ENCODE measurements at regions of chr15 and their contacts with region 1.

Region 1: DNA sequence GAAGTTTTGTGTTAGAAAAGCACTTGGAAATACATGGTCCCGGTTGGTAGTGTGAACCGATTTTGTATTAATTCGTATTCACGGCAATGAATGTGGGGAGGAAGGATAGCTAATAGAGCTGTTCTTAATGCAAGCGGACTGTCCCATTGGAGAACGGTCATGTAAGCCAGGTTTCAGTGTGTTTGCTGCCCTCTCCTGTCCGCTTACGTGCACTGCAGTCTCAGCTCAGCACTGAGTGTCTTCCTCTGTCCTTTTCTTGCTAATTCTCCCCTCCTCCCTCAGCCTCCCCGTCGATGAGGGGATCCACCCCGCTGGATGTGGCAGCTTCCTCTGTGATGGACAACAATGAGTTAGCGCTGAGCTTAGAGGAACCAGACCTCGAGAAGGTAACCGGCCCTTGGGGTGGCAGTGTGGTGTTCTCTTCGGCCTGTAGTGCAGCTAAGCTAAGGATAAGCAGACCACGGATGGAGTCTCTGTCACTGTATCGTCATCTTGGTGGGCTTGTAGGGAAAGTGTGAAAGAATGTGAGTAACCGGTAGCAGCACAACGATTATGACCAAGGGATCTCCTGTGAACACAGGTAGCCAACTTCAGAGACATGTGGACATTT is 267.5 kb upstream of the CHRM5 start:
- DNase-seq: peak; percentile 69 to 76
- ATAC-seq: peak; percentile 89 to 98 (median 94)
- H3K4me3 ChIP-seq: peak overlapping the region; percentile 27
- H3K27ac ChIP-seq: no peak overlapping the region
- H3K4me1 ChIP-seq: peaks cover 5% of the 10 kb centered on the region
- H3K27me3 ChIP-seq: no peaks in the 10 kb centered on the region
- CTCF ChIP-seq: peak; percentile 93

Region 2: GRCh38 chr15:33234014-33234461 is 466.8 kb before region 1 on chr15:
- intact Hi-C with region 1: loop called in 1 of 2 experiments (anchors 10 kb)
- DNase-seq: no peak
- ATAC-seq: peak in 1 of 4 donors; percentile 26
- H3K4me3 ChIP-seq: no peak overlapping the region
- H3K27ac ChIP-seq: no peak overlapping the region
- H3K4me1 ChIP-seq: no peaks in the 10 kb centered on the region
- H3K27me3 ChIP-seq: no peaks in the 10 kb centered on the region
- CTCF ChIP-seq: peak; percentile 41

Region 3: GRCh38 chr15:33292717-33293307 is 408.0 kb before region 1 on chr15:
- intact Hi-C with region 1: loop called (anchors 5 kb)
- DNase-seq: peak in 1 of 2 donors; percentile 24
- ATAC-seq: peak; percentile 61 to 90 (median 78)
- H3K4me3 ChIP-seq: peak overlapping the region; percentile 6
- H3K27ac ChIP-seq: peak overlapping the region; percentile 72
- H3K4me1 ChIP-seq: no peaks in the 10 kb centered on the region
- H3K27me3 ChIP-seq: no peaks in the 10 kb centered on the region
- CTCF ChIP-seq: peak; percentile 72

Region 4: DNA sequence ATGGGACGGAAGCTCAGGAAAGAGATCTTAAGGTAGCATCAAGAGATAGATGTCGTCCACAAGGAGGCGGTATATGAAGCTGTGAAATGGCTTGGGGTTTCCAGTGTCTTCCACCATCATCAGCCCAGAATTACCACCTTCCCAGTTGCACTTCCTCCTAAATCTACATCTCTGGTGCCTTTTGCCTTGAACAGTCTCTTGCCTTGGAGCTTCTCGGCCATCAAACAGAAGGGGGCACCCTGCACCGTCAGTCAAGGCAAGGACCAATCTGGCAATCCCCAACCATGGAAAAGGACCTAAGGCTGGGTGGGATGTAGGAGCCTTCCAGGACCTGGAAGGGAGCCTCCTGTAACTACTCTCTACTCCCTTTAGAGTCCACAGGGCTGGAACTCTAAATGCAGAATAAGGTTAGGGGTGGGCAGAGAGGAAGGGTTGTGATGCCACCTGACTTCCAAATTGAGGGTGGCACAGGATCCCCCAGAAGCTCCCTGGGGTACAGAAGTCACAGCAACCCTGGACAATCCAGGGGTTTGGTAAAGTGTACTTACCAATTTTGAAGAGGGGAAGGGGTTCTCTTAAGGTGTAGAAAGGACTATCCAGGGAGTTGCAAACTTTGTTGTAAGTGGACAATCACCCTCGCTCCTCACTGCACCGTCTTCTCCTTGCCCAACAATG is 391.1 kb before region 1 on chr15:
- intact Hi-C with region 1: loop called in 1 of 2 experiments (anchors 1 kb)
- DNase-seq: peak in 1 of 2 donors; percentile 33
- ATAC-seq: peak; percentile 70 to 80 (median 76)
- H3K4me3 ChIP-seq: peak overlapping the region; percentile 47
- H3K27ac ChIP-seq: no peak overlapping the region
- H3K4me1 ChIP-seq: peaks cover 6% of the 10 kb centered on the region
- H3K27me3 ChIP-seq: peaks cover 0 to 19% (median 11%) of the 10 kb centered on the region in 3 donors
- CTCF ChIP-seq: peak; percentile 57

Region 5: GRCh38 chr15:33492434-33493052 is 208.3 kb before region 1 on chr15:
- intact Hi-C with region 1: no loop called
- DNase-seq: no peak
- ATAC-seq: no peak
- H3K4me3 ChIP-seq: no peak overlapping the region
- H3K27ac ChIP-seq: no peak overlapping the region
- H3K4me1 ChIP-seq: no peaks in the 10 kb centered on the region
- H3K27me3 ChIP-seq: no peaks in the 10 kb centered on the region
- CTCF ChIP-seq: no peak

Region 6: GRCh38 chr15:33865416-33865815 is 164.6 kb after region 1 on chr15:
- intact Hi-C with region 1: no loop called
- DNase-seq: no peak
- ATAC-seq: no peak
- H3K4me3 ChIP-seq: no peak overlapping the region
- H3K27ac ChIP-seq: no peak overlapping the region
- H3K4me1 ChIP-seq: no peaks in the 10 kb centered on the region
- H3K27me3 ChIP-seq: no peaks in the 10 kb centered on the region
- CTCF ChIP-seq: no peak